ENCODE measurements at regions of chr19 and their contacts with region 1.

Region 1: GRCh38 chr19:49327878-49328544 is 3.0 kb upstream of the SLC6A16 start:
- DNase-seq: no peak
- H3K4me3 ChIP-seq: no peak overlapping the region
- CTCF ChIP-seq: peak; percentile 46

Region 2: GRCh38 chr19:49085868-49086232 is 242.2 kb before region 1 on chr19:
- CTCF ChIA-PET with region 1: no interaction called
- POLR2A ChIA-PET with region 1: no interaction called
- DNase-seq: no peak
- H3K4me3 ChIP-seq: peak overlapping the region; percentile 95
- CTCF ChIP-seq: no peak

Region 3: GRCh38 chr19:49315111-49315510 is 12.9 kb before region 1 on chr19:
- CTCF ChIA-PET with region 1: interaction called, 15 read pairs
- POLR2A ChIA-PET with region 1: no interaction called
- DNase-seq: no peak
- H3K4me3 ChIP-seq: no peak overlapping the region
- CTCF ChIP-seq: no peak

Region 4: GRCh38 chr19:49340069-49340864 is 12.3 kb after region 1 on chr19:
- CTCF ChIA-PET with region 1: interaction called, 10 read pairs
- POLR2A ChIA-PET with region 1: no interaction called
- DNase-seq: no peak
- H3K4me3 ChIP-seq: no peak overlapping the region
- CTCF ChIP-seq: no peak